CD4-positive, alpha-beta T cell (primary cell): ENCODE measurements at regions of chr19 and their contacts with region 1.

Region 1: GRCh38 chr19:13731147-13731964 is 33.0 kb upstream of the MRI1 start:
- DNase-seq: peak; percentile 87 to 96 (median 94)
- ATAC-seq: peak; percentile 100
- H3K4me3 ChIP-seq: peak overlapping the region; percentile 67
- H3K4me3 Mint-ChIP-seq: peak overlapping the region; percentile 89
- H3K27ac ChIP-seq: peak overlapping the region; percentile 26 to 41
- H3K27ac Mint-ChIP-seq: peak overlapping the region; percentile 51
- H3K4me1 ChIP-seq: peaks cover 20% of the 10 kb centered on the region
- H3K4me1 Mint-ChIP-seq: peaks cover 14% of the 10 kb centered on the region
- H3K27me3 ChIP-seq: no peaks in the 10 kb centered on the region
- H3K27me3 Mint-ChIP-seq: no peaks in the 10 kb centered on the region
- CTCF ChIP-seq: no peak

Region 2: GRCh38 chr19:13597640-13598039 is 133.7 kb before region 1 on chr19:
- CTCF ChIA-PET with region 1: no interaction called
- POLR2A ChIA-PET with region 1: no interaction called
- intact Hi-C with region 1: loop called in 1 of 2 experiments (anchors 10 kb)
- DNase-seq: peak in 12 of 14 experiments; percentile 9 to 77 (median 37)
- ATAC-seq: peak; percentile 69
- H3K4me3 ChIP-seq: no peak overlapping the region
- H3K4me3 Mint-ChIP-seq: no peak overlapping the region
- H3K27ac ChIP-seq: no peak overlapping the region
- H3K27ac Mint-ChIP-seq: no peak overlapping the region
- H3K4me1 ChIP-seq: peaks cover 3% of the 10 kb centered on the region
- H3K4me1 Mint-ChIP-seq: no peaks in the 10 kb centered on the region
- H3K27me3 ChIP-seq: peaks cover 0 to 3% of the 10 kb centered on the region in 2 experiments
- H3K27me3 Mint-ChIP-seq: peaks cover 25% of the 10 kb centered on the region
- CTCF ChIP-seq: peak; percentile 48

Region 3: DNA sequence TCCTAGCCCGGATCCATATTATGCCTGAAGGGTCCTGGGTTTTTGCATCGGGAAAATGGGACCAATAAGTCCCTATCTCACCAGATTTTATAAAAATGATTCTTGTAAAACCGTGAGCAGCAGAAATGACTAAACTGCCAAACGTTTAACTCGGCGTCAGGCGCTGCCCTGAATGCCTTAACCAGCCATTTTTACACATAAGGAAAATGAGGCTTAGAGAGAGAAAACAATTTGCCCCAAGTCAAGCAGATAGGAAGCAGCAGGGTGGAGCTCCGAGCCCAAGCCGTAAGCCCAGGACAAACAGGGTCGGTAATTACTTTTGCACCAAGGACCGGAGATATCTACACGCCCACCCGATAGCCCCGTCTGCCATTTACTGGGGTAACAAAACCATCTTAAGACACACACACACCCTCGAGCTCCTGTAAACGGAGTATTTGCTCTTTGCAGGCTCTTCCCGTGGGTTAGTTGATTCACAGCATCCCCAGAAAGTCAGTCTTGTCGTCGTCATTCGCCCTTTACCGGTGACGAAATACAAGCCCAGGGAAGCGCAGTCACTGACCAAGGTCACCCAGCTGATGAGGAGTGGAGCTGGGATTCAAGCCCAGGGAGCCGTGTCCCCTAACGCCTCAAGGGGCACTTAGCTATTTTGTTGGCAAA is 16.9 kb after region 1 on chr19:
- CTCF ChIA-PET with region 1: no interaction called
- POLR2A ChIA-PET with region 1: interaction called, 26 read pairs
- intact Hi-C with region 1: loop called in 1 of 2 experiments (anchors 1 kb)
- DNase-seq: peak in 7 of 14 experiments; percentile 10 to 58 (median 24)
- ATAC-seq: peak; percentile 15
- H3K4me3 ChIP-seq: peak overlapping the region; percentile 98
- H3K4me3 Mint-ChIP-seq: peak overlapping the region; percentile 91
- H3K27ac ChIP-seq: peak overlapping the region; percentile 79 to 95
- H3K27ac Mint-ChIP-seq: peak overlapping the region; percentile 87
- H3K4me1 ChIP-seq: peaks cover 34% of the 10 kb centered on the region
- H3K4me1 Mint-ChIP-seq: peaks cover 30% of the 10 kb centered on the region
- H3K27me3 ChIP-seq: no peaks in the 10 kb centered on the region
- H3K27me3 Mint-ChIP-seq: no peaks in the 10 kb centered on the region
- CTCF ChIP-seq: no peak

Region 4: DNA sequence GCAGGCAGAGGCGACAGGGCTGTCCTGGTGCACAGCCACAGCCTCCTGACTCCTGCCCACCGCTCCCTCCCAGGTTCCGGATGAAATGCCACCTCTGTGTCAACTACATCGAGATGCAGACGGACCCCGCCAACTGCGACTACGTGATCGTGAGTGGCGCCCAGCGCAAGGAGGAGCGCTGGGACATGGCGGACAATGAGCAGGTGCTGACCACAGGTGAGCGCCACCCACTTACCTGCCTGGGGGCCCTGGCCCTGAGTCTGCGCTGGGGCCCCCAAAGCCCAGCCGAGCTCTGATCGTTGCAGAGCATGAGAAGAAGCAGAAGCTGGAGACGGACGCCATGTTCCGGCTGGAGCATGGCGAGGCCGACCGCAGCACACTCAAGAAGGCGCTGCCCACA is 27.4 kb after region 1 on chr19:
- CTCF ChIA-PET with region 1: no interaction called
- POLR2A ChIA-PET with region 1: no interaction called
- intact Hi-C with region 1: no loop called
- DNase-seq: no peak
- ATAC-seq: no peak
- H3K4me3 ChIP-seq: no peak overlapping the region
- H3K4me3 Mint-ChIP-seq: no peak overlapping the region
- H3K27ac ChIP-seq: no peak overlapping the region
- H3K27ac Mint-ChIP-seq: no peak overlapping the region
- H3K4me1 ChIP-seq: peaks cover 2% of the 10 kb centered on the region
- H3K4me1 Mint-ChIP-seq: peaks cover 7% of the 10 kb centered on the region
- H3K27me3 ChIP-seq: no peaks in the 10 kb centered on the region
- H3K27me3 Mint-ChIP-seq: no peaks in the 10 kb centered on the region
- CTCF ChIP-seq: no peak